Activated CD4-positive, alpha-beta T cell treated with anti-CD3 and anti-CD28 coated beads, Interleukin-2, amount 10 ng/mL, durations not matched to agents 7 days and 5 days (primary cell): ENCODE measurements at regions of chr4 and their contacts with region 1.

Region 1: GRCh38 chr4:139188648-139189416 is 11.8 kb upstream of the ELF2 start:
- DNase-seq: no peak
- H3K4me3 Mint-ChIP-seq: no peak overlapping the region
- H3K27ac Mint-ChIP-seq: no peak overlapping the region
- H3K4me1 Mint-ChIP-seq: no peaks in the 10 kb centered on the region
- H3K27me3 Mint-ChIP-seq: peaks cover 6% of the 10 kb centered on the region

Region 2: DNA sequence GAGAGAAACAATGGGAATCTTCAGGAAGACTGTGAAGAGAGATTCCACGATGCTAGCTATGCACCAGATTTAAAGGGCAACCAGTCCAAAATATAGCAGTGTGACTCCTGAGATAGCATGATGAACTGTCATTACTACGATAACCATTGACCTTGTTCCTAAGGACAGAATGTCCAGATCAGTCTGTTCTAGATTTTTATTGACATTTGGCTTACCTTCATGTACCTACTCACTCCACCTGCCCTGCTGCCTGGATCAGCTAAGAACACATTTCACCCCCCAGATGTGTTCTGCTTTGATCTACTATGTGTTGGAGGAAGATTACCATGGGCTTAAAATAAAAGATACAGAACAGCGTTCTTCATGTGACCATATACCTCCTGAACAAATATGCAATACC is 61.9 kb before region 1 on chr4:
- CTCF ChIA-PET with region 1: no interaction called
- POLR2A ChIA-PET with region 1: interaction called, 13 read pairs
- DNase-seq: no peak
- H3K4me3 Mint-ChIP-seq: no peak overlapping the region
- H3K27ac Mint-ChIP-seq: no peak overlapping the region
- H3K4me1 Mint-ChIP-seq: no peaks in the 10 kb centered on the region
- H3K27me3 Mint-ChIP-seq: no peaks in the 10 kb centered on the region

Region 3: GRCh38 chr4:139154952-139155557 is 33.8 kb before region 1 on chr4:
- CTCF ChIA-PET with region 1: interaction called, 3 read pairs
- POLR2A ChIA-PET with region 1: interaction called, 16 read pairs
- DNase-seq: no peak
- H3K4me3 Mint-ChIP-seq: no peak overlapping the region
- H3K27ac Mint-ChIP-seq: no peak overlapping the region
- H3K4me1 Mint-ChIP-seq: peaks cover 2% of the 10 kb centered on the region
- H3K27me3 Mint-ChIP-seq: no peaks in the 10 kb centered on the region